Activated CD4-positive, alpha-beta memory T cell treated with anti-CD3 and anti-CD28 coated beads, Interleukin-2, amount 10 ng/mL, durations not matched to agents 7 days and 5 days (primary cell): ENCODE measurements at regions of chr2 and their contacts with region 1.

Region 1: DNA sequence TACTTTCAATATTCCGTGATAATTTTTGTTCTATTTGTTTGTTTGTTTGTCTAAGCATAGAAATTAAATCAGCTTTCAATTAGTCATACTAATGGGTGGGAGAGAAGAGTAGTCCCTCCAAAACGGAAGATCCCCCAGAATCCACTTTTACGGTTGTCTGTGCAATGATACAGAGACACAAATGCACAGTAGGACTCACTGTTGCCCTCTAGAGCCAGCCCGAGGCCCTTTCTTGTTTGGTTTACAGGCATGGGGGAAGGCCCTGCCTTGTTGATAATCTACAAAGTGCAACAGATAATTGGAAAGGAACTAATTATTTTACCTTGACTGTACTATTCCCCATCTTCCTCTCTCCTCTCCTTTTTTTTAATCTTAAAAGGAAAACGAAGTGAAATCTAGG is 121.1 kb downstream of the ACOXL start:
- DNase-seq: peak; percentile 68
- H3K4me3 Mint-ChIP-seq: no peak overlapping the region
- H3K27ac Mint-ChIP-seq: peak overlapping the region; percentile 76
- H3K4me1 Mint-ChIP-seq: peaks cover 47% of the 10 kb centered on the region
- H3K27me3 Mint-ChIP-seq: peaks cover 45% of the 10 kb centered on the region

Region 2: GRCh38 chr2:110748489-110748867 is 105.0 kb before region 1 on chr2:
- CTCF ChIA-PET with region 1: no interaction called
- POLR2A ChIA-PET with region 1: interaction called, 13 read pairs
- DNase-seq: peak; percentile 87
- H3K4me3 Mint-ChIP-seq: peak overlapping the region; percentile 22
- H3K27ac Mint-ChIP-seq: peak overlapping the region; percentile 69
- H3K4me1 Mint-ChIP-seq: peaks cover 42% of the 10 kb centered on the region
- H3K27me3 Mint-ChIP-seq: peaks cover 31% of the 10 kb centered on the region

Region 3: GRCh38 chr2:110812726-110813645 is 40.5 kb before region 1 on chr2:
- CTCF ChIA-PET with region 1: interaction called, 11 read pairs
- POLR2A ChIA-PET with region 1: no interaction called
- DNase-seq: no peak
- H3K4me3 Mint-ChIP-seq: no peak overlapping the region
- H3K27ac Mint-ChIP-seq: no peak overlapping the region
- H3K4me1 Mint-ChIP-seq: peaks cover 3% of the 10 kb centered on the region
- H3K27me3 Mint-ChIP-seq: peaks cover 28% of the 10 kb centered on the region

Region 4: GRCh38 chr2:110866466-110866865 is 13.0 kb after region 1 on chr2:
- CTCF ChIA-PET with region 1: interaction called, 11 read pairs
- POLR2A ChIA-PET with region 1: interaction called, 4 read pairs
- DNase-seq: peak; percentile 47
- H3K4me3 Mint-ChIP-seq: no peak overlapping the region
- H3K27ac Mint-ChIP-seq: peak overlapping the region; percentile 34
- H3K4me1 Mint-ChIP-seq: peaks cover 74% of the 10 kb centered on the region
- H3K27me3 Mint-ChIP-seq: peaks cover 29% of the 10 kb centered on the region